ENCODE measurements at regions of chr18 and their contacts with region 1.

Region 1: GRCh38 chr18:44537521-44537920 is 143.2 kb upstream of the SETBP1 start:
- DNase-seq: peak; percentile 84
- ATAC-seq: peak; percentile 97
- H3K4me3 ChIP-seq: no peak overlapping the region
- H3K27ac ChIP-seq: peak overlapping the region; percentile 40
- H3K4me1 ChIP-seq: peaks cover 26% of the 10 kb centered on the region
- H3K27me3 ChIP-seq: no peaks in the 10 kb centered on the region
- CTCF ChIP-seq: no peak

Region 2: GRCh38 chr18:44520981-44521672 is 16.4 kb before region 1 on chr18:
- CTCF ChIA-PET with region 1: no interaction called
- POLR2A ChIA-PET with region 1: no interaction called
- intact Hi-C with region 1: loop called (anchors 1 kb)
- DNase-seq: peak; percentile 71
- ATAC-seq: peak; percentile 94
- H3K4me3 ChIP-seq: peak overlapping the region; percentile 9; the same call in 1 of the 2 replicates
- H3K27ac ChIP-seq: peak overlapping the region; percentile 91
- H3K4me1 ChIP-seq: peaks cover 35% of the 10 kb centered on the region
- H3K27me3 ChIP-seq: no peaks in the 10 kb centered on the region
- CTCF ChIP-seq: no peak

Region 3: GRCh38 chr18:44826418-44827259 is 289.1 kb after region 1 on chr18:
- CTCF ChIA-PET with region 1: no interaction called
- POLR2A ChIA-PET with region 1: no interaction called
- intact Hi-C with region 1: no loop called
- DNase-seq: peak; percentile 63
- ATAC-seq: no peak
- H3K4me3 ChIP-seq: no peak overlapping the region
- H3K27ac ChIP-seq: peak overlapping the region; percentile 45
- H3K4me1 ChIP-seq: peaks cover 46% of the 10 kb centered on the region
- H3K27me3 ChIP-seq: no peaks in the 10 kb centered on the region
- CTCF ChIP-seq: no peak

Measured in PC-3 (cell line).